ENCODE measurements at regions of chr2 and their contacts with region 1.

Region 1: GRCh38 chr2:230712443-230713330 is at the start of gene CAB39:
- DNase-seq: peak; percentile 84
- ATAC-seq: peak; percentile 89
- H3K4me3 Mint-ChIP-seq: peak within 1 kb of the TSS; percentile 88
- H3K27ac Mint-ChIP-seq: peak within 1 kb of the TSS; percentile 92
- H3K4me1 Mint-ChIP-seq: peaks cover 35% of the 10 kb centered on the region
- H3K27me3 Mint-ChIP-seq: no peaks in the 10 kb centered on the region
- CTCF ChIP-seq: peak; percentile 80
- total RNA-seq, gene CAB39: 119 to 120 TPM

Region 2: DNA sequence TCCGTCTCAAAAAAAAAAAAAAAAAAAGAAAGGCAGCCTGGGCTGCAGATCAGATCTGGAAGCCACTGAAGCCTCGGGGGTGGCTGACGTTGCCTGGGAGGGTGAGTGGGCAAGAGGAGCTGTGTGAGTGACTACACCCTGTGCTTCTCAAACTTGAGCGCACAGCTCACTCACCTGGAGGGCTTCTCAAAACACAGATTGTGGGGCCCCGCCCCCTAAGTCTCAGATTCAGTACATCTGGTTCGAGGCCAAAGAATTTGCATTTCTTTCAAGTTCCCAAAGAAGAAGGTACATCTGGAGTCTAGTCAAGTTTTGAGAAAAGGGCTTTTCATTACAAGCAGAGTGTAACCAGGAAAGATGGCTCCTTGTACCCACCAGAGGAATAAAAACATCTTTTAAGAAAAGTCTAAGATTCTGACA is 97.8 kb before region 1 on chr2:
- CTCF ChIA-PET with region 1: interaction called, 17 read pairs
- POLR2A ChIA-PET with region 1: interaction called, 3 read pairs
- intact Hi-C with region 1: no loop called
- DNase-seq: peak; percentile 82
- ATAC-seq: peak; percentile 77
- H3K4me3 Mint-ChIP-seq: no peak overlapping the region
- H3K27ac Mint-ChIP-seq: peak overlapping the region; percentile 23
- H3K4me1 Mint-ChIP-seq: peaks cover 24% of the 10 kb centered on the region
- H3K27me3 Mint-ChIP-seq: no peaks in the 10 kb centered on the region
- CTCF ChIP-seq: no peak

Region 3: GRCh38 chr2:230643576-230644291 is 69.0 kb before region 1 on chr2:
- CTCF ChIA-PET with region 1: interaction called, 3 read pairs
- POLR2A ChIA-PET with region 1: interaction called, 15 read pairs
- intact Hi-C with region 1: no loop called
- DNase-seq: peak; percentile 91
- ATAC-seq: peak; percentile 92
- H3K4me3 Mint-ChIP-seq: peak overlapping the region; percentile 34
- H3K27ac Mint-ChIP-seq: peak overlapping the region; percentile 97
- H3K4me1 Mint-ChIP-seq: peaks cover 38% of the 10 kb centered on the region
- H3K27me3 Mint-ChIP-seq: no peaks in the 10 kb centered on the region
- CTCF ChIP-seq: no peak

Region 4: GRCh38 chr2:230658877-230659652 is 53.6 kb before region 1 on chr2:
- CTCF ChIA-PET with region 1: interaction called, 5 read pairs
- POLR2A ChIA-PET with region 1: interaction called, 20 read pairs
- intact Hi-C with region 1: loop called (anchors 2 kb)
- DNase-seq: peak; percentile 92
- ATAC-seq: peak; percentile 71
- H3K4me3 Mint-ChIP-seq: peak overlapping the region; percentile 71
- H3K27ac Mint-ChIP-seq: peak overlapping the region; percentile 97
- H3K4me1 Mint-ChIP-seq: peaks cover 95% of the 10 kb centered on the region
- H3K27me3 Mint-ChIP-seq: no peaks in the 10 kb centered on the region
- CTCF ChIP-seq: no peak

Region 5: GRCh38 chr2:230668184-230668938 is 44.3 kb before region 1 on chr2:
- CTCF ChIA-PET with region 1: interaction called, 12 read pairs
- POLR2A ChIA-PET with region 1: interaction called, 4 read pairs
- intact Hi-C with region 1: no loop called
- DNase-seq: peak; percentile 67
- ATAC-seq: peak; percentile 32
- H3K4me3 Mint-ChIP-seq: peak overlapping the region; percentile 40
- H3K27ac Mint-ChIP-seq: peak overlapping the region; percentile 88
- H3K4me1 Mint-ChIP-seq: peaks cover 69% of the 10 kb centered on the region
- H3K27me3 Mint-ChIP-seq: no peaks in the 10 kb centered on the region
- CTCF ChIP-seq: no peak

Region 6: GRCh38 chr2:230981704-230982103 is 269.0 kb after region 1 on chr2:
- CTCF ChIA-PET with region 1: no interaction called
- POLR2A ChIA-PET with region 1: no interaction called
- intact Hi-C with region 1: no loop called
- DNase-seq: peak; percentile 72
- ATAC-seq: peak; percentile 54
- H3K4me3 Mint-ChIP-seq: peak overlapping the region; percentile 67
- H3K27ac Mint-ChIP-seq: peak overlapping the region; percentile 57
- H3K4me1 Mint-ChIP-seq: peaks cover 80% of the 10 kb centered on the region
- H3K27me3 Mint-ChIP-seq: no peaks in the 10 kb centered on the region
- CTCF ChIP-seq: no peak

Region 7: DNA sequence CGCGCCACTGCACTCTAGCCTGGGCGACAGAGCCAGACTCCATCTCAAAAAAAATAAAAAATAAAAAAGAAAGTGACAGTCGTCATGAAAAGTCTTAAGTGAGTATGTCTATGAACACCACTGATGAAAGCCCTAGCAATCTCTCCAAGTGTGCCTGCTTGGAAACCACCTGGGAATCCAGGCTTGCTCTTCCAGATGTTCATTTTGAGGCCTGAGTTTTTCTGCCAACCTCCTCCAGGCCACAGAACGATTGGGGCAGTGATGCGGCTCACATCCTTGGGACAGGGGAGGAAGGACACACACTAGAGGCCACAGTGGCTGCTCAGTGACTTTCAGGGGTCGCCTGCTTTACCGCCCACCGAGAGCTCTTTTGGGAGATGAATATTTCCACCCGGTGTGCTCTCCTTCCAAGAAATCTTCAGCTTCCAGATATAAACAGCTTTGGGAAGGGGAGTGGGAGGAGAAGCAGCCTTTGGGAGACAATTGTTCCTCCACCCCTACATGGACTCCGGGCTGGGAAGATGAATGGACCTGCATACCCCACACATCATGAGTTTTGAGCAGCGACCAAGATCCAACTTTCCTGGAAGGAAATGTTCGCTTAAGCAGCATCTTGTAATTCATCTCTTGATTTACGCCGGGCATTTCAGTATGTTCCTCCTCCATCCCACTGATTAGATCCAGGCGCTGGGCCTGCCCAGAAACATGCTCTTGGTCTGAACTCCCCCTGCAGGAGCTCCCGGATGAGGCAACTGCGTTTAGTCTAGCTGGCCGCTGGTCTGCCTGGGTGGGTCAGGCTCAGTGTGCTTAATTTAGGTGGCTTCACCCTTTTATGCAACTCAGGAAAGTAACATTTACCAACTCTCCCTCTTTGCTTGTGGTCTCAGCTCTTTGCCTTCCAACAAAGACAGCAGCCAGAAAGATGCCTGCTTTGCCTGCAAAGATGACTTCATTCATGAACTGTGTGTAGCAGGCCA is 479.5 kb after region 1 on chr2:
- CTCF ChIA-PET with region 1: no interaction called
- POLR2A ChIA-PET with region 1: no interaction called
- intact Hi-C with region 1: no loop called
- DNase-seq: no peak
- ATAC-seq: no peak
- H3K4me3 Mint-ChIP-seq: no peak overlapping the region
- H3K27ac Mint-ChIP-seq: no peak overlapping the region
- H3K4me1 Mint-ChIP-seq: no peaks in the 10 kb centered on the region
- H3K27me3 Mint-ChIP-seq: peaks cover 15% of the 10 kb centered on the region
- CTCF ChIP-seq: no peak